ENCODE measurements at regions of chr17 and their contacts with region 1.

Region 1: DNA sequence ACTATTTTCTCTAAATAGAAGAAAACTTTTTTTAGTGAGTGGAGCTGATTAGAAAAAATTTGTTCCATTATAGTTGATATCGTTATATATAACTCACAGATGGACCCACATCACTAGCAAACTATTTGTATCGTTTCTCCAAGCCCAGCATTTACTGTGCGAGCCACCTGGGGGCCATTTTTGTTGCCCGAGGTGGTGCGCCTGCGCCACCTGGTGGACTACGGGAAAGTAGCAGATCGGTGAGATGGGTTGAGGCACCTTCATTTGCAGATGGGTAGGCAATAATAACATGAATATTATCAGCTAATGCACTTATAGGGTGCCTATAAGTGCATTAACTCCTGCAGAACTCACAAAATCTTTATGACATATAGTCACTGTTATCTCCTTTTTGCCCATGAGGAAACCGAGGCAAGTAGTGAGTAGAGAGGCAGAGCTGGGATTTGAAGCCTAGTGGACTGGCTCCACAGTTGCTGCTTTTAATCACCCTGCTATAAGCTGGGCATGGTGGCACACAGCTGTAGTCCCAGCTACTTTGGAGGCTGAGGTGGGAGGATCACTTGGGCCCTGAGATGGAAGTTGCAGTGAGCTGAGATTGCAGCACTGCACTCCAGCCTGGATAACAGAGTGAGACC is 23.2 kb upstream of the NTN1 start:
- DNase-seq: peak; percentile 79
- ATAC-seq: peak; percentile 55
- H3K4me3 Mint-ChIP-seq: no peak overlapping the region
- H3K27ac Mint-ChIP-seq: no peak overlapping the region
- H3K4me1 Mint-ChIP-seq: peaks cover 29% of the 10 kb centered on the region
- H3K27me3 Mint-ChIP-seq: peaks cover 36% of the 10 kb centered on the region
- CTCF ChIP-seq: peak; percentile 90

Region 2: DNA sequence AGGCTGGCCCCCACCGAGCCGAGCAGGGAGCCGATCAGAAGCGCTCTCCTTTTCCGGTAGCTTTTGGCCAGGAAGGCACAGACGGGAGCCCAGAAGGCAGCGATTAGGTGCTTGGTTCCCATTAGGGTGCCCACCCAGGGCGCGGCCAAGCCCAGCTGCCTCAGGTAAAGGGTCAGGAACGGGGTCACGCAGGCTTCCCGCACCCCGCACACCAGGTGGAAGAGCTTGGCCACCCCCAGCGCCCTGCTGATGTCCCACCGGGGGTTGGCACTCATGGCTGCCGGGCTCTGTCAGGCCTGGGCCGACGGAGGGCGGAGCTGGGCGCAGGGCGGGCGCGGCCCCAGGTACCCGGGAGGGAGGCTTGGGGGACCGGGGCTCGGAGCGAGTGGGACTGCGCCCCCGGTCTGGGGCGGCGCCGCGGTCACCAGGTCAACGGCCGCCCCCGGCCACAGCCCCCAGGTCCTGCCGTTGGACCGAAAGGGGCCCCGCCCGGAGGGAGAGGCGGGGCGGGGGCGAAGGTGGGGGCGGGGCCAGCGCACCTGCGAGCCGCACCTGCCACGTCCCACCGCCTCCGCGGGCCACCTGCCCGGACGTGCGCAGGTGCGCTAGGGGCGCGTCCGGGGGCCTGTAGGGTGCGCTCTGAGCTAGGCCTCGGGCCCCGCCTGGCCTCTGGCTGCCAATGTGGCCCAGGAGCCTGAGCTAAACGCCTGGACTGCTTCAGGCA is 199.1 kb before region 1 on chr17 and contains the start of gene MFSD6L:
- CTCF ChIA-PET with region 1: interaction called, 15 read pairs
- POLR2A ChIA-PET with region 1: interaction called, 3 read pairs
- DNase-seq: peak; percentile 88
- ATAC-seq: peak; percentile 96
- H3K4me3 Mint-ChIP-seq: peak within 1 kb of the TSS; percentile 81
- H3K27ac Mint-ChIP-seq: peak within 1 kb of the TSS; percentile 27; the same call in 1 of the 2 replicates
- H3K4me1 Mint-ChIP-seq: peaks cover 23% of the 10 kb centered on the region
- H3K27me3 Mint-ChIP-seq: peaks cover 4% of the 10 kb centered on the region; the same call in 1 of the 2 replicates
- CTCF ChIP-seq: no peak
- total RNA-seq, gene MFSD6L: 4.0 to 5.2 TPM (median 4.5 TPM) in 3 replicates

Region 3: DNA sequence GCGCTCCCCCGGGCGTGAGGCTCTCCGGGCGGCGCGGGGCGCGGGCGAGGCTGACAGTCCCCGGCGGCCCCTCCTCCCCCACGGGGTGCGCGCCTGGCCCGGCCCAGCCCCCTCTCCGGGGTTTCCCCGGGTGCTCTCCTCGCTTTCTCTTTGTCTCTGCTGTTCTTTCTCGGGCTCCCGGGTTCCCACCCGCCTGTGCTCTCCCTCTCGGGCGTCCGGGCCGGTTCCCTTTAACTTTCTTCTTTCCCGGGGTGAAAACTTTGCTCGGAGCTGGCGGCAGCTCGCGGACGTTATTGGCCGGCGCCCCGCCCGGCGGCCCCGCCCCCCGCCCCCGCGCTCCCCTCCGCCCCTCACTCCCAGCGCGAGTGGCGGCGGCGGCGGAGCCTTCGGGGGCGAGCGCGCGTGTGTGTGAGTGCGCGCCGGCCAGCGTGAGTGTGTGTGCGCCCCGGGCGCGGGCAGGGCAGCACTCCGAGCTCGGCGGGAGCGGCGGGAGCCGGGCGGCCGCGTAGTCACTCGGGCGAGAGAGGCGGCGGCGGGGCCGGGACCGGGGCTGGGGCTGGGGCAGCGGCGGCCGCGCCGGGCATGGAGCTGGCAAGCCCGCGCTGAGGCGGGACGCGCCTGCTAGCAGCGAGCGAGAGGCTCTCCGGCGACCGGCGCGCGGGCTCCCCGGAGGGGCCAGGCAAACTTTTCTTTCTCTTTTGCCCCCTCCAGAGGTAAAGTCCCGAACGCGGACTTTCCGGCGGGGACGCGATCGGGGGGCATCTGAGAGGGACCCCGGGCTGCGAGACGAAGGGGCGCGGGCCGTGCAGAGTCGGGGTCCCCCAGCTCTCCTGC is 23.3 kb after region 1 on chr17 and contains the start of gene NTN1:
- CTCF ChIA-PET with region 1: interaction called, 23 read pairs
- POLR2A ChIA-PET with region 1: no interaction called
- DNase-seq: peak; percentile 64
- ATAC-seq: peak; percentile 55
- H3K4me3 Mint-ChIP-seq: peak within 1 kb of the TSS; percentile 66
- H3K27ac Mint-ChIP-seq: no peak within 1 kb of the TSS
- H3K4me1 Mint-ChIP-seq: peaks cover 37% of the 10 kb centered on the region
- H3K27me3 Mint-ChIP-seq: peaks cover 50% of the 10 kb centered on the region
- CTCF ChIP-seq: no peak
- total RNA-seq, gene NTN1: 3.0 to 5.5 TPM (median 3.1 TPM) in 3 replicates

Region 4: GRCh38 chr17:9150446-9151090 is 152.5 kb after region 1 on chr17:
- CTCF ChIA-PET with region 1: no interaction called
- POLR2A ChIA-PET with region 1: no interaction called
- DNase-seq: no peak
- ATAC-seq: 0 out of 2 replicates have a peak, but pooled peaks have one; percentile 32
- H3K4me3 Mint-ChIP-seq: no peak overlapping the region
- H3K27ac Mint-ChIP-seq: 0 out of 2 replicates have a peak overlapping the region, but pooled peaks have one; percentile 46
- H3K4me1 Mint-ChIP-seq: peaks cover 14% of the 10 kb centered on the region
- H3K27me3 Mint-ChIP-seq: no peaks in the 10 kb centered on the region
- CTCF ChIP-seq: no peak

Region 5: GRCh38 chr17:9162275-9162985 is 164.3 kb after region 1 on chr17:
- CTCF ChIA-PET with region 1: interaction called, 16 read pairs
- POLR2A ChIA-PET with region 1: no interaction called
- DNase-seq: peak; percentile 68
- ATAC-seq: peak; percentile 90
- H3K4me3 Mint-ChIP-seq: peak overlapping the region; percentile 51
- H3K27ac Mint-ChIP-seq: no peak overlapping the region
- H3K4me1 Mint-ChIP-seq: peaks cover 36% of the 10 kb centered on the region
- H3K27me3 Mint-ChIP-seq: no peaks in the 10 kb centered on the region
- CTCF ChIP-seq: peak; percentile 54

Region 6: GRCh38 chr17:9522074-9522473 is 524.0 kb after region 1 on chr17:
- CTCF ChIA-PET with region 1: interaction called, 15 read pairs
- POLR2A ChIA-PET with region 1: no interaction called
- DNase-seq: no peak
- ATAC-seq: peak; percentile 87
- H3K4me3 Mint-ChIP-seq: no peak overlapping the region
- H3K27ac Mint-ChIP-seq: no peak overlapping the region
- H3K4me1 Mint-ChIP-seq: peaks cover 27% of the 10 kb centered on the region
- H3K27me3 Mint-ChIP-seq: no peaks in the 10 kb centered on the region
- CTCF ChIP-seq: 0 out of 2 replicates have a peak, but pooled peaks have one; percentile 17

Measured in WTC11 (cell line).